Activated naive CD8-positive, alpha-beta T cell treated with anti-CD3 and anti-CD28 coated beads, Interleukin-2, amount 10 ng/mL, durations not matched to agents 7 days and 5 days (primary cell): ENCODE measurements at regions of chr11 and their contacts with region 1.

Region 1: DNA sequence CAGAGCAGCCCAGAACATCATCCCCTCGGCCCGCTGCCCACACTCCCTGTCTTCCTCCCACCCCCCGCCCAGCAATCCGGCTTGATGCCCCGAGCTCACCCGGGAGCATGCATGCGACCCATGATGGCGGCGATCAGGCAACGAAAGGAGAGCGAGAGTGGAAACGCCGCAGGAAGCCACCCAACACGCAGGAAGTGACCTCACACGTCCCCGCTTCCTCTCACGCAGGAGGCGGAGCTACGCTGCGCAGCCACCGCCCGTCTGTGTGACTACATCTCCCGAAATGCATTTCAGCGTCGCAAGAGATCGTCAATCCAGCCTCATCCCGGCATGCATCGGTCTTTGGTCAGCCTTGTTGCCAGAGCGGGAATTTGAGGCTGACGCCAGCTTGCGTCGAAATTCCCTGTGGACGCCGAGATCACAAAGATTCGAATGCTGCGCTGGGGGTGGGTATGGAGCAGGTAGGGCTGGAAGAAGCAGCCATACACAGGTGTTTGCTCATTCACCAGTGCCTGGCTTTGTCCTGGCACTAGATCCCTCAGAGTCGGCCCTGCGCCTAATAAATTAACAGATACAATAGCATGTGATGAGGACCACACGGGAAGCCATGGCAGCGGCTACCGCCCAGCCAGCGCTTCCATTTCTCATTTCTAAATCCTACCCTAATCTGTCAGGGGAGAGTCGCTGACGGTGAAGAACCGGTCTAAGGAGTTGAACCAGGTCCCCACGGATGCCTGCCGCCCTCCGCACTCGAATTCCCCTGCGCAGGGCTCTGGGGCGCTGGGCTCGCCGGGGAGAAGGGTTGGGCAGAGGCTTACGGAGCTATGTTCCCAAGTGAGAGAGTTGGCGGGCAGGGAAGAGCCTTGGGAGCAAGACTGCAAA is at the start of gene RPS13:
- DNase-seq: peak; percentile 91
- ATAC-seq: peak; percentile 94
- H3K4me3 Mint-ChIP-seq: peak within 1 kb of the TSS; percentile 97
- H3K27ac Mint-ChIP-seq: peak within 1 kb of the TSS; percentile 98
- H3K4me1 Mint-ChIP-seq: peaks cover 25% of the 10 kb centered on the region
- H3K27me3 Mint-ChIP-seq: no peaks in the 10 kb centered on the region
- total RNA-seq, gene RPS13: 1,055 to 1,108 TPM

Region 2: GRCh38 chr11:17036666-17037542 is 40.9 kb before region 1 on chr11:
- POLR2A ChIA-PET with region 1: no interaction called
- DNase-seq: no peak
- ATAC-seq: no peak
- H3K4me3 Mint-ChIP-seq: no peak overlapping the region
- H3K27ac Mint-ChIP-seq: no peak overlapping the region
- H3K4me1 Mint-ChIP-seq: no peaks in the 10 kb centered on the region
- H3K27me3 Mint-ChIP-seq: peaks cover 5% of the 10 kb centered on the region

Region 3: GRCh38 chr11:17063171-17064002 is 14.4 kb before region 1 on chr11:
- POLR2A ChIA-PET with region 1: no interaction called
- DNase-seq: peak; percentile 61
- ATAC-seq: peak; percentile 74
- H3K4me3 Mint-ChIP-seq: no peak overlapping the region
- H3K27ac Mint-ChIP-seq: peak overlapping the region; percentile 39
- H3K4me1 Mint-ChIP-seq: no peaks in the 10 kb centered on the region
- H3K27me3 Mint-ChIP-seq: peaks cover 4% of the 10 kb centered on the region

Region 4: DNA sequence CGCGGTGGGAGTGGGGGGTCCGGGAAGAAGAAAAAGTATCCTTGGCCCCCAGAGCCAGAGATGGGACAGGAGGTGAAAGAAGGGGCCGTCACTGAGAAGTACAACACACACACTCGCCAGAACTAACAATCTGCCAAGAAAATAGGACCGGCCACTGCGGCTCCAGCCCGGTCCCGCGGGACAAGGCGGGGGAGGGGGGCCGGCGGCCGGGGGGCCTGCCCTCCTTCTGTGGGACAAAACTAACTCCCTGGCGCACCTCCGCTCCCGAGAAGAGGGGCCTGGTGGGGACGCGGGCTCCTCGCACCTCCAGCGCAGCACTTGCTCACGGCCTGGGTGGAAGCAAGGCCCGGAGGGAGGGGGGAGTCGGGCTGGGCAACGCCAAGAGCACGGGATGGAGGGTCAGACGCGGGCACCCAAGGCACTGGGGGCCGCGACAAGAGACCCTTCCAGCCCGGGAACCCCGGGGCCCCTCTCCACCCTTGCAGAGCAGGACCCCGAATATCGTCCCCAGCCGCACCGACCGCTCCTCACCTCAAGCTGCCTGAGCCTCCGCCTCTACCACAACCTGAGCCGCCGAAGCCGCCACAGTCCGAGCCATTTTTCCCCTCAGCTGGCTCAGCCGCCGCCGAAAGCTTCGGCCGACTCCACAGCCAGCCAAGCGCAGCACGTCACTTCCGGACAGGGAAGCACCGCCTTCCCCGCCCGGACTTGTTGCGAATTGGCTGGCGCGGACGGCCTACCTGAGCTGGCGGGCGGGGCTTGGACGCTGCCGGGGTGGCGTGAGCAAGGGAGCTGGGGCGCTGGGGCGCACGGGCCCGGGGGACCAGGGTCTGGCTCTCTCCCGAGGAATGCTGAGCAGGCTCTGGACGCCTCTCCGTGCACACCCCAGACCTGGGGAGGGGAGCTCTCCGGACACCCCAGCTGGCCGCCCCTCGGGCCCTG is 129.8 kb after region 1 on chr11 and contains the start of gene PIK3C2A:
- POLR2A ChIA-PET with region 1: interaction called, 14 read pairs
- DNase-seq: peak; percentile 93
- ATAC-seq: peak; percentile 98
- H3K4me3 Mint-ChIP-seq: peak within 1 kb of the TSS; percentile 100
- H3K27ac Mint-ChIP-seq: peak within 1 kb of the TSS; percentile 98
- H3K4me1 Mint-ChIP-seq: peaks cover 28% of the 10 kb centered on the region
- H3K27me3 Mint-ChIP-seq: no peaks in the 10 kb centered on the region
- total RNA-seq, gene PIK3C2A: 27.6 to 31.4 TPM